Activated T-helper 2 cell treated with anti-CD3 and anti-CD28 coated beads, Interferon-gamma antibody, Interleukin-2, Interleukin-4, amounts not matched to agents 10 μg/mL and 5 μg/mL and 100 μg/mL, durations not matched to agents 14 hours and 24 hours and 36 hours (primary cell): ENCODE measurements at regions of chr3 and their contacts with region 1.

Region 1: GRCh38 chr3:42090973-42091731 is at the start of gene TRAK1:
- DNase-seq: no peak
- H3K4me3 Mint-ChIP-seq: no peak within 1 kb of the TSS
- H3K27ac Mint-ChIP-seq: peak within 1 kb of the TSS; percentile 64
- H3K4me1 Mint-ChIP-seq: peaks cover 53% of the 10 kb centered on the region
- H3K27me3 Mint-ChIP-seq: no peaks in the 10 kb centered on the region
- total RNA-seq, gene TRAK1: 37.8 and 40.9 TPM in 2 replicates

Region 2: GRCh38 chr3:40580494-40581091 is 1510.6 kb before region 1 on chr3:
- intact Hi-C with region 1: loop called (anchors 10 kb)
- DNase-seq: peak; percentile 42
- H3K4me3 Mint-ChIP-seq: no peak overlapping the region
- H3K27ac Mint-ChIP-seq: no peak overlapping the region
- H3K4me1 Mint-ChIP-seq: peaks cover 3% of the 10 kb centered on the region
- H3K27me3 Mint-ChIP-seq: peaks cover 11% of the 10 kb centered on the region

Region 3: GRCh38 chr3:42012935-42013690 is 78.0 kb before region 1 on chr3:
- intact Hi-C with region 1: loop called (anchors 2 kb)
- DNase-seq: peak; percentile 61
- H3K4me3 Mint-ChIP-seq: peak overlapping the region; percentile 88
- H3K27ac Mint-ChIP-seq: peak overlapping the region; percentile 96
- H3K4me1 Mint-ChIP-seq: peaks cover 41% of the 10 kb centered on the region
- H3K27me3 Mint-ChIP-seq: no peaks in the 10 kb centered on the region

Region 4: GRCh38 chr3:42045719-42046243 is 45.4 kb before region 1 on chr3:
- intact Hi-C with region 1: loop called (anchors 5 kb)
- DNase-seq: no peak
- H3K4me3 Mint-ChIP-seq: no peak overlapping the region
- H3K27ac Mint-ChIP-seq: no peak overlapping the region
- H3K4me1 Mint-ChIP-seq: peaks cover 32% of the 10 kb centered on the region
- H3K27me3 Mint-ChIP-seq: no peaks in the 10 kb centered on the region